Gastrocnemius medialis (tissue), 4 donors: ENCODE measurements at regions of chr21 and their contacts with region 1.

Region 1: GRCh38 chr21:34603002-34603709 is 11.8 kb downstream of the RCAN1 start:
- DNase-seq: peak; percentile 51 to 61
- ATAC-seq: peak; percentile 65 to 75
- H3K4me3 ChIP-seq: no peak overlapping the region
- H3K27ac ChIP-seq: no peak overlapping the region
- H3K4me1 ChIP-seq: peaks cover 3 to 4% of the 10 kb centered on the region in 2 donors
- H3K27me3 ChIP-seq: no peaks in the 10 kb centered on the region
- CTCF ChIP-seq: peak; percentile 45 to 76 (median 67)
- POLR2A ChIP-seq: no peak

Region 2: GRCh38 chr21:34360488-34361241 is 242.5 kb before region 1 on chr21:
- in situ Hi-C with region 1: no loop called
- intact Hi-C with region 1: loop called (anchors 1 kb)
- DNase-seq: no peak
- ATAC-seq: no peak
- H3K4me3 ChIP-seq: no peak overlapping the region
- H3K27ac ChIP-seq: no peak overlapping the region
- H3K4me1 ChIP-seq: peaks cover 0 to 7% of the 10 kb centered on the region in 2 donors
- H3K27me3 ChIP-seq: no peaks in the 10 kb centered on the region
- CTCF ChIP-seq: no peak
- POLR2A ChIP-seq: no peak

Region 3: GRCh38 chr21:34510148-34511142 is 92.7 kb before region 1 on chr21:
- in situ Hi-C with region 1: no loop called
- intact Hi-C with region 1: loop called (anchors 1 kb)
- DNase-seq: peak in 1 of 2 donors; percentile 38
- ATAC-seq: peak; percentile 30 to 51
- H3K4me3 ChIP-seq: no peak overlapping the region
- H3K27ac ChIP-seq: peak overlapping the region in 1 of 4 donors; percentile 21
- H3K4me1 ChIP-seq: peaks cover 0 to 4% of the 10 kb centered on the region in 2 donors
- H3K27me3 ChIP-seq: no peaks in the 10 kb centered on the region
- CTCF ChIP-seq: peak; percentile 40 to 71 (median 63)
- POLR2A ChIP-seq: no peak

Region 4: GRCh38 chr21:34582506-34583150 is 20.5 kb before region 1 on chr21:
- in situ Hi-C with region 1: no loop called
- intact Hi-C with region 1: no loop called
- DNase-seq: no peak
- ATAC-seq: peak; percentile 47 to 78
- H3K4me3 ChIP-seq: no peak overlapping the region
- H3K27ac ChIP-seq: no peak overlapping the region
- H3K4me1 ChIP-seq: peaks cover 38 to 47% of the 10 kb centered on the region in 2 donors
- H3K27me3 ChIP-seq: no peaks in the 10 kb centered on the region
- CTCF ChIP-seq: peak in 1 of 5 experiments; percentile 43
- POLR2A ChIP-seq: no peak